ENCODE measurements at regions of chr5 and their contacts with region 1.

Region 1: GRCh38 chr5:179697993-179698934 is 503 bp upstream of the CANX start:
- DNase-seq: peak; percentile 99
- ATAC-seq: peak; percentile 90
- H3K4me3 ChIP-seq: peak overlapping the region; percentile 65 to 95 (median 90)
- H3K4me3 Mint-ChIP-seq: peak overlapping the region; percentile 99
- H3K27ac ChIP-seq: peak overlapping the region; percentile 92 to 98
- H3K27ac Mint-ChIP-seq: peak overlapping the region; percentile 99
- H3K4me1 ChIP-seq: peaks cover 16 to 27% of the 10 kb centered on the region in 2 donors
- H3K4me1 Mint-ChIP-seq: peaks cover 30% of the 10 kb centered on the region
- H3K27me3 ChIP-seq: no peaks in the 10 kb centered on the region
- H3K27me3 Mint-ChIP-seq: no peaks in the 10 kb centered on the region
- CTCF ChIP-seq: no peak

Region 2: DNA sequence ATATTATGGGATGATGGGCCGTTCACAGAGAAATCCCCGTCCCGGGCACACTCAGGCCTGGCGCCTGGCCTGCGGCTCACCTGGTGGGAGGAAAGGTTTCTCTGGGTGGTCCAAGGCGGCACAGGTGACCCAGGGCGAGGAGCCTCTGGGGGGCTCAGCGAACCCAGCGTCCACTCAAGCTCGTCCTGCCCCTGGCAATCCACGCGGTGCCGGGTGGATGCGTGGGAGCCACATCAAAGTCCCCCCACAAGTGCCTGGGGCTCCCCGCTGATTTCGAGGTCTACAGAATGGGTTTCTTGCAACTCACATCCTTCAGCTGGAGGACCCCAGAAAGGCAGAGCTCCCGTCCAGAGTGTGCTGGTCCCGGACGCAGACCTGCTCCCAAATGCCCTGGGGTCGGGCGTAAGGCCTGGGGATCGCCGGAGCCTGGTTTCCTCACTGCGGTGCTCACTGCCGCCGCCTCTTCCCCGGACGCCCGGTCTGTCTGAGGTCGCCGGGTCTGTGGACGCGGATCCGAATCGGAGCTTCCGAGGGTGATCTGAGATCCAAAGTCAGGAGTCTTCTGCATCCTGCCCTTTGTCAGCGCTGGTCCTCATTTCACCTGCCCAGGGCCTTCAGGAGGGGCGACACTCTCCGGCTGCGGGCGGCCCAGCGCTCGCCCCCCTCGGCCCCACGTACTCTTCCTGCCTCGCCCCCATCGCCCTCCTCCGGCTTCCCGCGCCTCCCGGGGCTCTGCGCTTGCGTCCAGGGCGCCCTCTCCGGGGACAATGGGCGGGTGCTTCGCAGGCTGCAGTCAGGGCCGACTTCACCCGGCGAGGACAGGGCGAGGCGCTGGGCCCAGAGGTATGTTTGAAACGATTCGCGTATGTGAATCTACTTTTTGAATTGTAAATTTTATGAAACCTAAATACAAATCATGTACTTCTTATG is 167.9 kb before region 1 on chr5:
- CTCF ChIA-PET with region 1: no interaction called
- POLR2A ChIA-PET with region 1: no interaction called
- intact Hi-C with region 1: no loop called
- DNase-seq: peak; percentile 77
- ATAC-seq: peak; percentile 86
- H3K4me3 ChIP-seq: peak overlapping the region in 4 of 5 experiments; percentile 56 to 64 (median 64)
- H3K4me3 Mint-ChIP-seq: peak overlapping the region; percentile 78
- H3K27ac ChIP-seq: peak overlapping the region in 1 of 2 donors; percentile 47
- H3K27ac Mint-ChIP-seq: peak overlapping the region; percentile 56
- H3K4me1 ChIP-seq: peaks cover 23 to 31% of the 10 kb centered on the region in 2 donors
- H3K4me1 Mint-ChIP-seq: peaks cover 38% of the 10 kb centered on the region
- H3K27me3 ChIP-seq: no peaks in the 10 kb centered on the region
- H3K27me3 Mint-ChIP-seq: no peaks in the 10 kb centered on the region
- CTCF ChIP-seq: peak; percentile 38

Region 3: DNA sequence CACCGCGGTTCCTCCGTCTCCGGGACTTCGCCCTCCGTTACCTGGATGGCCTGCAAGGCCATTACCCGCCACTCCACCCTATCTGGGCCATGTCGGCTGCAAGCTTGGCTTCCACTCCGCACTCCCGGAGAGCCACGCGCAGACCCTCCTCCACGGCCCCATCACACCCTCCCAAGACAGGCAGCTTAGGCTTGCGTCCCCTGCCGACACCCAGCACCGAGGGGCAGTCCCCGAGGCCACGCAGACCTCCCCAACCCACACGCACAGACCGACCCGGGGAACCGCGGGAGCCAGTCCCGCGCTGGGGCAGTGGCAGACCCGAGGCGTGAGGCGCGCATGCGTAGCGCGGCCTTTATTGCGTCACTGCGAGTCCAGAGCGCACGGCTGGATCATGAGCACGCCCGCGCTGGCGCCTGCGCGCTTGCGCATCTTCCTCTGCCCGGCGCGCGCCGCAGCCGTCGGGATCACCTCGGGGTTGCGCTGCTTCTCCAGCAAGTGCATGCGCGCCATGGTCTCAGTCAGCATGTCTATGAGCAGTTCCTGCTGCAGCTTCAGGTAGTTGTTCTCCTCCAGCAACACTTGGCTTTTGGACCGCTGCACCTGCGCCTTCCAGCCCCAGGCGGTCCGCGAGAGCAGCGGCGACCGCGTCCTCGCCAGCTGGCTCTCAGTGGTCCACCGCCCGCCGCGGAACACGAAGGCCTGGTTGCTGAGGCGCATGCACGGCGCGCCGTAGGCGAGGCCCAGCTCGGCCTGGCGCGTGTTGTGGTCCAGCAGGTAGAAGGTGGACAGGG is 19.8 kb before region 1 on chr5:
- CTCF ChIA-PET with region 1: interaction called, 9 read pairs
- POLR2A ChIA-PET with region 1: no interaction called
- intact Hi-C with region 1: loop called (anchors 1 kb)
- DNase-seq: peak; percentile 97
- ATAC-seq: peak; percentile 91
- H3K4me3 ChIP-seq: peak overlapping the region; percentile 48 to 90 (median 75)
- H3K4me3 Mint-ChIP-seq: peak overlapping the region; percentile 98
- H3K27ac ChIP-seq: peak overlapping the region; percentile 74 to 86
- H3K27ac Mint-ChIP-seq: peak overlapping the region; percentile 97
- H3K4me1 ChIP-seq: peaks cover 7 to 19% of the 10 kb centered on the region in 2 donors
- H3K4me1 Mint-ChIP-seq: peaks cover 25% of the 10 kb centered on the region
- H3K27me3 ChIP-seq: no peaks in the 10 kb centered on the region
- H3K27me3 Mint-ChIP-seq: no peaks in the 10 kb centered on the region
- CTCF ChIP-seq: peak; percentile 26

Region 4: DNA sequence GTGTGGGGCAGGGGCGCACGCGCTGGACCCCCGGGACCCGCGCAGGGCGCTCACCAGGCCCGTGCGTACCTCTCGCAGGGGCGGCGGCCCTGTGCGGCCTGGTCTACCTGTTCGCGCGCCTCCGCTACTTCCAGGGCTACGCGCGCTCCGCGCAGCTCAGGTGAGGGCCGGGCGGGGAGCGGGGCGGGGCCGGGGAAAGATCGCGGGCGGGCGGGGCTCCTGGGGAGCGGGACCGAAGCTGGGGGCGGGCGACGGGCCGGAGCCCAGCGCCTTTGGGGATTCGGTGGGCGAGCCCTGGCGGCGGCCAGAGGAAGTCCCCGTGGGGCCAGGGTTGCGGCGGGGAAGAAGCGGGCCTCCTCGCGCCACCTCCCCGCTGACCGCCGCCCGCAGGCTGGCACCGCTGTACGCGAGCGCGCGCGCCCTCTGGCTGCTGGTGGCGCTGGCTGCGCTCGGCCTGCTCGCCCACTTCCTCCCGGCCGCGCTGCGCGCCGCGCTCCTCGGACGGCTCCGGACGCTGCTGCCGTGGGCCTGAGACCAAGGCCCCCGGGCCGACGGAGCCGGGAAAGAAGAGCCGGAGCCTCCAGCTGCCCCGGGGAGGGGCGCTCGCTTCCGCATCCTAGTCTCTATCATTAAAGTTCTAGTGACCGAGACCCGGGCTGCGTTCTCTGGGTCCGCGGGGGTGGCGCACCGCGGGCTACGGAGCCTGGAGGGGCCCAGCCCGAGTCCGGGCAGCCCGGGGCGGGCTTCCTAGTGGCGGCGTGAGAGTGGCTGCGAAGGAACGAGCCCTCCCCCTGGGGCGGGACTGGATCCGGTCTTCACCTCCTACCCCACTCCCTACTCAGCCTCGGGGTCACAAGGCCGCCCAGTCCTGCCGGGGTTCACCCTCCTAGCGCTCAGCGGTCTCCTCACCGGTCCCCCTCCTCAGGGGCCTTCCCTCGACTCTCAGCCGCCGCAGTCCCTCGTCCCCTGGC is 97.9 kb after region 1 on chr5:
- CTCF ChIA-PET with region 1: no interaction called
- POLR2A ChIA-PET with region 1: no interaction called
- intact Hi-C with region 1: loop called (anchors 1 kb)
- DNase-seq: peak; percentile 86
- ATAC-seq: peak; percentile 79
- H3K4me3 ChIP-seq: peak overlapping the region; percentile 5 to 68 (median 63)
- H3K4me3 Mint-ChIP-seq: peak overlapping the region; percentile 70
- H3K27ac ChIP-seq: peak overlapping the region; percentile 41 to 66
- H3K27ac Mint-ChIP-seq: peak overlapping the region; percentile 70
- H3K4me1 ChIP-seq: peaks cover 28 to 32% of the 10 kb centered on the region in 2 donors
- H3K4me1 Mint-ChIP-seq: peaks cover 29% of the 10 kb centered on the region
- H3K27me3 ChIP-seq: no peaks in the 10 kb centered on the region
- H3K27me3 Mint-ChIP-seq: no peaks in the 10 kb centered on the region
- CTCF ChIP-seq: peak; percentile 75

Region 5: DNA sequence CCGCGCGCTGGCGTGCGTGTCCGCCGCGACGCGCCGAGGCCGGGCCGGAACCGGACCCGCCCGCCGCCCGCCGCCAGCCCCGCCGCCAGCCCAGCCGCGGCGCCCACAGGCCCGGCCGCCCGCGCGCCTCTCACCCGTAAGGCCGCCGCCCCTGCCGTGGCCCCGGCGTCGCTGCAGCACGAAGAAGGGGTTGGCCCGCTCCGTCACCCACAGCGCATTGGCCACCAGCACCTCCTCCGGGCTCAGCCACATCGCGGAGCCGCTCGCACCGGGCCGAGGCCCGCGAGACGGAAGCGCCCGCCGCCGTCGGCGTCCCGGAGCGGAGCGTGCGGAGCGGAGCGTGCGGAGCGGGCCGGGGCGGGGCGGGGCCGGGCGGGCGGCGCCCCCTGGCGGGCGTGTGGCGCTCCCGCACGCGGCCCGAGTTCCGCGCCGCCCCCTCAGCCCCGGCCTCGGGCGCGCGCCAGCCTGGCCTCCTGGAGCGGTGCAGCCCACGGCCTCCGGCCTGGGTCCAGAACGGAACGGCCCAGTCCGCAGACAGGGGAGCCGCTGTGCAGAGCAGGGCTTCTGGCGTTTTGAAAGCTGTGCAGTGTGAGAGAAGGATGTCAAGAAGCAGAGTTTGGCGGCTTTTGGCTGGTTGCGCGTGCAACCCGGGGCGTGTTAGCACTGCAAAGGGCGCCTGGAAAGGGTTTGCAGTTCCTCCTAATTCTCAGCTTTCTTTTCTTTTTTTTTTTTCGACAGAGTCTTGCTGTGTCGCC is 209.5 kb after region 1 on chr5 and contains the start of gene TBC1D9B:
- CTCF ChIA-PET with region 1: no interaction called
- POLR2A ChIA-PET with region 1: no interaction called
- intact Hi-C with region 1: loop called (anchors 10 kb)
- DNase-seq: peak; percentile 88
- ATAC-seq: peak; percentile 88
- H3K4me3 ChIP-seq: peak within 1 kb of the TSS; percentile 47 to 61 (median 59)
- H3K4me3 Mint-ChIP-seq: peak within 1 kb of the TSS; percentile 92
- H3K27ac ChIP-seq: peak within 1 kb of the TSS in 1 of 2 donors; percentile 16
- H3K27ac Mint-ChIP-seq: peak within 1 kb of the TSS; percentile 94
- H3K4me1 ChIP-seq: peaks cover 13 to 24% of the 10 kb centered on the region in 2 donors
- H3K4me1 Mint-ChIP-seq: peaks cover 19% of the 10 kb centered on the region
- H3K27me3 ChIP-seq: no peaks in the 10 kb centered on the region
- H3K27me3 Mint-ChIP-seq: no peaks in the 10 kb centered on the region
- CTCF ChIP-seq: no peak
- total RNA-seq, gene TBC1D9B: 144 and 149 TPM in 2 replicates

Region 6: GRCh38 chr5:180284149-180284548 is 585.9 kb after region 1 on chr5:
- CTCF ChIA-PET with region 1: no interaction called
- POLR2A ChIA-PET with region 1: no interaction called
- intact Hi-C with region 1: no loop called
- DNase-seq: no peak
- ATAC-seq: no peak
- H3K4me3 ChIP-seq: no peak overlapping the region
- H3K4me3 Mint-ChIP-seq: no peak overlapping the region
- H3K27ac ChIP-seq: no peak overlapping the region
- H3K27ac Mint-ChIP-seq: no peak overlapping the region
- H3K4me1 ChIP-seq: no peaks in the 10 kb centered on the region
- H3K4me1 Mint-ChIP-seq: peaks cover 6% of the 10 kb centered on the region
- H3K27me3 ChIP-seq: no peaks in the 10 kb centered on the region
- H3K27me3 Mint-ChIP-seq: no peaks in the 10 kb centered on the region
- CTCF ChIP-seq: no peak

Measured in B cell (primary cell).